A549 (cell line): ENCODE measurements at regions of chr17 and their contacts with region 1.

Region 1: DNA sequence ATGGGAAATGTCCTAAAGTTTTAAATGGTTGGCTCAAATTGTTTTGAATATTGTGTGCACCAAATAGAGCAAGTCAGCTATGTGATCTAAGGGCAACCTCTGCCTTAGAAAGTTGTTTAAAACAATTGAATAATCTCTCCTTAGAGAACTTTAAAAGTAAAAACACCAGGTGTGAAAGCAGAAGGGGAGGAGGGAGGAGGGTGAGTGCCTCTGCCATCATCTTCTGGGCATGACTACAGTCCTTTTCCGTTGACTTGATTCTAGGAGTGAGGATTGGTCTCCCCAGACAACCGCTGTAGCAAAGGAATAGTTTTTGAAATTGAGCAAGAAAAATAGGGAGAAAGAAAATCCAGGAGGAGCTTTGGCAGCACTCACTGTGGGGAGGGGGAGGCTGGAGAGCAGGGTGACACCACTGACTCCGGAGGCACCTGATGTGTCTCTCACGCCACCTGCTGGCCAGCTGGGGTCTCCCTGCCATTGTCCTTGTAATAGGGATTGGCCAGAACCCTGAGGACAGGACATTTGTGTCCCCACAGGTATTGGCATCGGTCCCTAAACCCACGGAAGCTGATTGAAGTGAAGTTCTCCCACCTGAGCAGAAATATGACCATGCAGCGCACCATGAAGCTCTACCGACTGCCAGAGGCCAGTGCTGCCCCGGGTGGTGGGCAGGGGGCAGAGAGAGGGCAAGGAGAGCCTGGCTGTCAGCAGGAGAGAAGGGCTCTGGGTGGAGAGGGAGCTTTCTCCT is 33.3 kb downstream of the PLCD3 start:
- DNase-seq: peak; percentile 85 to 99
- ATAC-seq: peak; percentile 87 to 92
- H3K4me3 ChIP-seq: no peak overlapping the region
- H3K27ac ChIP-seq: no peak overlapping the region
- H3K4me1 ChIP-seq: peaks cover 11% of the 10 kb centered on the region
- CTCF ChIP-seq: peak; percentile 98
- EP300 ChIP-seq: no peak
- POLR2A ChIP-seq: no peak
- RAD21 ChIP-seq: peak; percentile 84 to 87

Region 2: GRCh38 chr17:44781553-44782495 is 317.2 kb before region 1 on chr17:
- CTCF ChIA-PET with region 1: interaction called, 15 read pairs
- POLR2A ChIA-PET with region 1: no interaction called
- DNase-seq: no peak
- ATAC-seq: no peak
- H3K4me3 ChIP-seq: no peak overlapping the region
- H3K27ac ChIP-seq: no peak overlapping the region
- H3K4me1 ChIP-seq: peaks cover 8% of the 10 kb centered on the region; the same call in 2 of the 3 replicates
- CTCF ChIP-seq: no peak
- EP300 ChIP-seq: no peak
- POLR2A ChIP-seq: no peak
- RAD21 ChIP-seq: no peak

Region 3: DNA sequence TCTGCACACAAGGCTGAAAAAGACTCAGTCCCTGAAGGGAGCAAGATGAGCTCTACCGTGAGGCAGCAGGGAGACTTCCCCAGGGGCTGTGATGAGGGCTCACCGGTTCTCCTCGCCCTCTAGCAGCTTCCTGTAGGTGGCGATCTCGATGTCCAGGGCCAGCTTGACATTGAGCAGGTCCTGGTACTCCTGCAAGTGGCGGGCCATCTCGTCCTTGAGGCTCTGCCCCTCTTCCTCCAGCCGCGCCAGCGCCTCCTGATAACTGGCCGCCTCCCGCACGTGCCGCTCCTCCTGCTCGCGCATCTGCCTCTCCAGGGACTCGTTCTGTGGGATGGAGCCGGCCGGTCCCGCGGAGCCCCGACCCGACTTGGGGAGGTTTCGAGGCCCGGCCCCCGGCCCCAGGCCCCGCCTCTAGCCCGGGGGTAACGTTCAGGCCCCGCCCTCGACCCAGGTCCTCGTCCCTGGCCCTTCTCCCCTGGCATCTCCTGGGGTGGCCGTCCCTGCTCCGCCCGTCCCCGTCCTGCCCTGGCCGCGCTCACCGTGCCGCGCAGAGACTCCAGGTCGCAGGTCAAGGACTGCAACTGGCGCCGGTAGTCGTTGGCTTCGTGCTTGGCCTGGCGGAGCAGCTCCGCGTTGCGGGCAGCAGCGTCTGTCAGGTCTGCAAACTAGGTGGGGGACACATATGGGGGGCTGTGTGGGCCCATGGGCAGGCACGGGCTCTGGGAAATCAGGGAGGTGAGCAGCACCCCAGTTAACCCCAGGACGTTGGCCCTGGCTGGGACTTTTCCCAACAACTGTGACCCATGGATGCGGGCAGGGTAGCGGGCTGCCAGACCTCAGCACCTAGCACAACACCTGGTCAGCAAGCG is 187.7 kb before region 1 on chr17:
- CTCF ChIA-PET with region 1: interaction called, 104 read pairs
- POLR2A ChIA-PET with region 1: no interaction called
- DNase-seq: peak; percentile 87 to 95
- ATAC-seq: peak; percentile 64 to 92
- H3K4me3 ChIP-seq: no peak overlapping the region
- H3K27ac ChIP-seq: peak overlapping the region; percentile 36 to 91; a peak in 4 of 6 replicates
- H3K4me1 ChIP-seq: peaks cover 46% of the 10 kb centered on the region
- CTCF ChIP-seq: peak; percentile 66
- EP300 ChIP-seq: no peak
- POLR2A ChIP-seq: no peak
- RAD21 ChIP-seq: peak; percentile 43 to 55

Region 4: GRCh38 chr17:45038728-45039634 is 60.1 kb before region 1 on chr17:
- CTCF ChIA-PET with region 1: interaction called, 16 read pairs
- POLR2A ChIA-PET with region 1: no interaction called
- DNase-seq: no peak
- ATAC-seq: no peak
- H3K4me3 ChIP-seq: no peak overlapping the region
- H3K27ac ChIP-seq: 0 out of 6 replicates have a peak overlapping the region, but pooled peaks of 1 of the 2 experiments have one; percentile 0
- H3K4me1 ChIP-seq: peaks cover 12% of the 10 kb centered on the region; the same call in 1 of the 3 replicates
- CTCF ChIP-seq: no peak
- EP300 ChIP-seq: no peak
- POLR2A ChIP-seq: no peak
- RAD21 ChIP-seq: no peak

Region 5: GRCh38 chr17:45060797-45061605 is 38.0 kb before region 1 on chr17 and contains the start of gene NMT1:
- CTCF ChIA-PET with region 1: interaction called, 145 read pairs
- POLR2A ChIA-PET with region 1: interaction called, 9 read pairs
- DNase-seq: peak; percentile 99 to 100
- ATAC-seq: peak; percentile 97
- H3K4me3 ChIP-seq: peak within 1 kb of the TSS; percentile 67
- H3K27ac ChIP-seq: peak within 1 kb of the TSS; percentile 87 to 91
- H3K4me1 ChIP-seq: peaks cover 16% of the 10 kb centered on the region
- CTCF ChIP-seq: no peak
- EP300 ChIP-seq: no peak
- POLR2A ChIP-seq: peak; percentile 91
- RAD21 ChIP-seq: no peak
- polyA plus RNA-seq, gene NMT1: 82.9 and 95.8 TPM in 2 replicates

Region 6: GRCh38 chr17:45081042-45081703 is 17.9 kb before region 1 on chr17:
- CTCF ChIA-PET with region 1: interaction called, 96 read pairs
- POLR2A ChIA-PET with region 1: no interaction called
- DNase-seq: no peak
- ATAC-seq: no peak
- H3K4me3 ChIP-seq: no peak overlapping the region
- H3K27ac ChIP-seq: no peak overlapping the region
- H3K4me1 ChIP-seq: peaks cover 1% of the 10 kb centered on the region; the same call in 2 of the 3 replicates
- CTCF ChIP-seq: no peak
- EP300 ChIP-seq: no peak
- POLR2A ChIP-seq: no peak
- RAD21 ChIP-seq: no peak

Region 7: DNA sequence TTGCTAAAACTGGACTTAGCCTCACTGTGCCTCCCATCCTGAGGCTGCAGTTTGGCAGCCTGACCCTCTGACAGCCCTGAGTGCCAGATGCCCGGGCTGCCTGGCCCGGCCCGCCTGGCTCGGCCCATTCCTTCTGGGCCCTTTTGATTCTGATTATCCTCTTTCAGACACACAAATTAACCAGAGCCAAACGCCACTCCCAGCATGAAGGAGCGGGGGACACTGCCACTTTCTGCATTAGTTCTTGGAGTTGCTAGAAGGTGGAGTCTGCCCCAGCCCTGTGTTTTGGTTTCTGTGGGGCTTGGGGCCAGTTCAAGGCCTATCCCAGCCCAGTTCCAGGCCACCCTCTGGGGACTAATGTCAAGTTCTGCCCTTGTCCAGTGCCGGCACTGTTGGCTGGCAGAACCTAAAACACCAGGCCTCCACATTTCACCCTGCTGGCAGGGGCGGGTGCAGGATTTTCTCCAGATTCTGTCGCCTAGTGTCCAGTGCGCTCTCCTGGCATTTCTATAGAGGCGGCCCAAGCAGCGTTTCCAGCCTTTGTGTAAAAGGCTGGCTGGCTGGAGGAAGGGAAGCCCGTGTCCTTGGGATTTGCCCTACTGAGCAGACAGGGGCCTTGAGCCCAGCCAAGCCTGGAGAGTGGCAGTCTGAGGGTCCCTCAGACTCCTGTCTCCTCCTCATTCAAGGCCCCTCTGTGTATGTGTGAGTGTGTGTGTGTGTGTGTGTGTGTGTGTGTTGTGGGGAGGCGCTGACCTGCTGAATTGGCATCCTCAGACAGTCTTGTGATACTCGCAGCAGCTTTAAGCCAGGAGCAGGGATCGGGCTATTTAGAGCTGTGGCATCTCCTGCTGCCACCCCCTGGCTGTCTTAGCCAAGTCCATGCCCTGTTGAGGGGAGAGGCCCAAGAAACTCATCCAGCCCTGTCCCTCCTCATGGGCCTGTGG is 11.9 kb after region 1 on chr17:
- CTCF ChIA-PET with region 1: interaction called, 161 read pairs
- POLR2A ChIA-PET with region 1: interaction called, 4 read pairs
- DNase-seq: no peak
- ATAC-seq: peak in 1 of 2 experiments; percentile 22; a peak in 3 of 6 replicates
- H3K4me3 ChIP-seq: no peak overlapping the region
- H3K27ac ChIP-seq: peak overlapping the region in 1 of 2 experiments; percentile 48; a peak in 3 of 6 replicates
- H3K4me1 ChIP-seq: no peaks in the 10 kb centered on the region
- CTCF ChIP-seq: no peak
- EP300 ChIP-seq: no peak
- POLR2A ChIP-seq: no peak
- RAD21 ChIP-seq: no peak